ENCODE measurements at regions of chr18 and their contacts with region 1.

Region 1: GRCh38 chr18:21194871-21195771 is 46.9 kb upstream of the GREB1L start:
- DNase-seq: peak; percentile 11 to 39 (median 19)
- H3K4me3 ChIP-seq: no peak overlapping the region
- H3K4me3 Mint-ChIP-seq: no peak overlapping the region
- H3K27ac ChIP-seq: no peak overlapping the region
- H3K27ac Mint-ChIP-seq: no peak overlapping the region
- H3K4me1 ChIP-seq: no peaks in the 10 kb centered on the region
- H3K4me1 Mint-ChIP-seq: no peaks in the 10 kb centered on the region
- H3K27me3 ChIP-seq: peaks cover 6 to 8% of the 10 kb centered on the region in 2 donors
- H3K27me3 Mint-ChIP-seq: peaks cover 9 to 25% (median 17%) of the 10 kb centered on the region in 3 donors
- CTCF ChIP-seq: peak; percentile 77

Region 2: GRCh38 chr18:21949326-21950015 is 754.4 kb after region 1 on chr18:
- intact Hi-C with region 1: loop called in 1 of 2 experiments (anchors 5 kb)
- DNase-seq: no peak
- H3K4me3 ChIP-seq: no peak overlapping the region
- H3K4me3 Mint-ChIP-seq: no peak overlapping the region
- H3K27ac ChIP-seq: no peak overlapping the region
- H3K27ac Mint-ChIP-seq: no peak overlapping the region
- H3K4me1 ChIP-seq: no peaks in the 10 kb centered on the region
- H3K4me1 Mint-ChIP-seq: no peaks in the 10 kb centered on the region
- H3K27me3 ChIP-seq: no peaks in the 10 kb centered on the region
- H3K27me3 Mint-ChIP-seq: peaks cover 0 to 11% (median 2%) of the 10 kb centered on the region in 3 donors
- CTCF ChIP-seq: no peak

Region 3: GRCh38 chr18:21955757-21956652 is 760.9 kb after region 1 on chr18:
- intact Hi-C with region 1: loop called (anchors 5 kb)
- DNase-seq: peak; percentile 36 to 63 (median 51)
- H3K4me3 ChIP-seq: no peak overlapping the region
- H3K4me3 Mint-ChIP-seq: no peak overlapping the region
- H3K27ac ChIP-seq: no peak overlapping the region
- H3K27ac Mint-ChIP-seq: no peak overlapping the region
- H3K4me1 ChIP-seq: no peaks in the 10 kb centered on the region
- H3K4me1 Mint-ChIP-seq: no peaks in the 10 kb centered on the region
- H3K27me3 ChIP-seq: no peaks in the 10 kb centered on the region
- H3K27me3 Mint-ChIP-seq: peaks cover 0 to 9% (median 2%) of the 10 kb centered on the region in 3 donors
- CTCF ChIP-seq: peak; percentile 96

Measured in CD14-positive monocyte (primary cell).